AG04449 (cell line): ENCODE measurements at regions of chr5 and their contacts with region 1.

Region 1: DNA sequence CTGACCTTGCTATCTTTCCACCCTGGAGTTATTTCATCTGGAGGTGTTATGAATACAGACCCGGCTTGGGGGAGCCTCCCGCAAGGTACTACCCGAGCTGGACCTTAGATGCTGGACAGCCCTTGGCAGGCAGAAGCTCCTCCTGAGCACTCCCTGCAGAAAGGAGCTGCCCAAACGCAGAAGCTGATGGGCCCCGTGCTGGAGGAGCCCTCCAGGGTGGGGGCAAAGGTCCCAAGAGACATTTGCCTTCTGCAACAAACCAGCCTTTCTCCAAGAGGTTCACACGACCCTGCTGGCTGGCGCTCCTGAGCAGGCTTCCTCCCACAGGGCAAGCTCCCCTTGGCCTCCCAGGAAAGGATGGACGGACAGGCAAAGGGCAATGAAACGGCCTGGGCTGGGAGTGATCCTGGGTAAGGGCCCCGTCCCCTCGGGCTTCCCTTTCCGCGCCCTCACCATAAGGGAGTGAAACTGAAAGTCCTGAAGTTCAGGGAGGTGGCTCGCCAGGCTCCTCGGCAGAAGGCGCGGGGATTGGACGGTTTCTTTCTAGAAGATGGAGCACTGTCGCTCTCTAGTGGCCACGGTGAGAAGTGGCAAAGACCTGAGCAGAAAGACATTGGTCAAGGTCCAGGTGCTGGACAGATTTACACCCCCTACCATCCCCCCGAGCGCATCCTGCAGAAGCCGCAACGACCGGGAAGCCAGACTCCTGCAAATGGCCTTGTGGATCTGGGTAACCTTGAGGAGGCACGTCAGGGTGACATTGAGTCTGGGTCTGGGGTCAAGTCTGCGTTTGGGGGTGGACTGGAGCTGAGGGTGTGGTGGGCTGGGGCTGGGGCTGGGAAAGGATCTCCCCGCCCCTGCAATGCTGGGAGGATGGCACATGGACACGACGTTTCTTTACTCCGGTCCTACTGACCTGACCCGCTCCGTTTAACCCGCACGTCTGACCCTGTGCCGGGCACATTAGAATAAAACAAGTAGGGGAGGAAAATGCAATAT is 56.4 kb downstream of the NEURL1B start:
- DNase-seq: no peak
- H3K4me3 ChIP-seq: peak overlapping the region; percentile 68
- CTCF ChIP-seq: peak; percentile 82

Region 2: DNA sequence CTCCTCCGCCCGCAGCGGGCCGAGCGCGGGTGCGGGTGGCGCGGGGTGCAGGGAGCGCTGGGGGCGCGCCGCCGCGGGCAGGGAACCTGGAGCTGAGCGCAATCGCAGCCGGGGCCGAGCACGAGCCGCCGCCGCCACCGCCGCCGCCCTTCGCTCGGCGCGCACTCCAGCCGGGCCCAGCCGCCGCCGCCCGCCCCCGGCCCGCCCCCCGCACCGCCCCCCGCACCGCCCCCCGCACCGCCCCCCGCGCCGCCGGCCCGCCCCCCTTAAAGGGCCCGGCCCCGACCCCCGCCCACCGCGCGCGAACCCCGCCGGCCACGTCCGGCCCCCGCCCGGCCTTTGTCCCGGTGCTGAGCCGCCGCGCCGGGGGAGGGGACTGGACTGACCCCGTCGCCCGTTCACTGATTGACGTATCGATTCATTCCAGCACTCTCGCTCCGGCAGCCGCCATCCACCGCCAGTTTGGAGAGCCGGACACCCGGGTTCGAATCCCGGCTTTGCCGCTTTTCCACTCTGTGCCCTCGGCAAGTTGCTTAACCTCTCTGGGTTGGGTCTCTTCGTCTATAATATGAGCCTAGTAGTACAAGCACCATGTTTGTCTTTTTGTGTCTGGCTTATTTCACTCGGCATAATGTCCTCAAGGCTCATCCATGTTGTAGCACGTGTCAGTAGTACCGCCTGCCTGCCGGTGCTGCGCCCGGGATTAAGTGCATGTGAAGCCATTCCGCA is 242.9 kb before region 1 on chr5 and contains the start of gene SH3PXD2B:
- CTCF ChIA-PET with region 1: interaction called, 99 read pairs
- POLR2A ChIA-PET with region 1: no interaction called
- DNase-seq: no peak
- H3K4me3 ChIP-seq: peak within 1 kb of the TSS; percentile 85
- CTCF ChIP-seq: no peak

Region 3: GRCh38 chr5:172473427-172473826 is 224.0 kb before region 1 on chr5:
- CTCF ChIA-PET with region 1: interaction called, 412 read pairs
- POLR2A ChIA-PET with region 1: no interaction called
- DNase-seq: no peak
- H3K4me3 ChIP-seq: no peak overlapping the region
- CTCF ChIP-seq: no peak

Region 4: DNA sequence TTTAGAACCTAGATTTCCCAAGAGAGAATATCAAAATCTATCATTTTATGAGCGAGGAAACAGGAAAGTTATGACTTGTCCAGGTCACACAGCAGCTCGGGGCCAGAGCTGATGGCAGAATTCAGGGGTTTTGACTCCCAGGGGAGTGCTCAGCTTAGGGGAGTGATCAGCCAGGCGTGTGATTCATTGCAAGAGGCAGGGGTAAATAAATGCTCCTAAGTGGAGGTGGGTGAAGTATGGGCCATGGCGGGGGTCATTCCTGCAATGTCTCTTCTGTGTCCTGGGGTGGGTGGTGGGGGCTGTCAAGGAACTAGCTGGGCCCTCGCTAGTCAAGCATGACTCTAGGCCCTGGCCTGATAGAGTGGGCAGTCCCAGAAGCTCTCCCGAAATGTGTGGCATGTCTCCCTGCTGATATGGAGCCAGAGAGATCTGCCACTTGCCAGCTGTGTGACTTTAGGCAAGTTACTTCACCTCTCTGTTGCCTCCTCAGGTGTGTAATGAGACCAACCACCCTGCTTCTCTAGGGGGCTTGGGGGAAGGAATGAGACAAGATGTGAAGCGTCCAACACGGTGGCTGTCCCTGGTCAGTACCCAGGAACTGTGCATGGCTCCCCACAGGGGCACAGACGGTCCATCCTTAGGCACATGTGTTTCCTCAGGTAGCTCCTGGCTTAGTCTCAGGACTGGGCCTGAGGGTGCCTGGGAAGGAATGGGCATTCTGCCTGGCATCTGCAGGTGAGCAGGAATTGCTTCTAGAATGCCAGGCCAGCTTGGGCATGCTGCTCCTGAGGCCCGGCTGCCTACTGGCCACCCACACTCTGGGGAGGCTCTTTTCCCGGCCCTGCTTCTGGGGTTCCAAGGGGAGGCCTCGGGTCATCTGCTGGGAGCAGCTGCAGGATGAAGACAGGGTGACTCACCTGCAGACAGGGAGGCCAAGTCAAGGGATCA is 206.6 kb before region 1 on chr5:
- CTCF ChIA-PET with region 1: interaction called, 28 read pairs
- POLR2A ChIA-PET with region 1: no interaction called
- DNase-seq: no peak
- H3K4me3 ChIP-seq: no peak overlapping the region
- CTCF ChIP-seq: no peak

Region 5: GRCh38 chr5:172666251-172666650 is 31.2 kb before region 1 on chr5:
- CTCF ChIA-PET with region 1: interaction called, 10 read pairs
- POLR2A ChIA-PET with region 1: no interaction called
- DNase-seq: no peak
- H3K4me3 ChIP-seq: no peak overlapping the region
- CTCF ChIP-seq: no peak

Region 6: GRCh38 chr5:172680921-172681320 is 16.5 kb before region 1 on chr5:
- CTCF ChIA-PET with region 1: interaction called, 59 read pairs
- POLR2A ChIA-PET with region 1: no interaction called
- DNase-seq: no peak
- H3K4me3 ChIP-seq: no peak overlapping the region
- CTCF ChIP-seq: no peak

Region 7: DNA sequence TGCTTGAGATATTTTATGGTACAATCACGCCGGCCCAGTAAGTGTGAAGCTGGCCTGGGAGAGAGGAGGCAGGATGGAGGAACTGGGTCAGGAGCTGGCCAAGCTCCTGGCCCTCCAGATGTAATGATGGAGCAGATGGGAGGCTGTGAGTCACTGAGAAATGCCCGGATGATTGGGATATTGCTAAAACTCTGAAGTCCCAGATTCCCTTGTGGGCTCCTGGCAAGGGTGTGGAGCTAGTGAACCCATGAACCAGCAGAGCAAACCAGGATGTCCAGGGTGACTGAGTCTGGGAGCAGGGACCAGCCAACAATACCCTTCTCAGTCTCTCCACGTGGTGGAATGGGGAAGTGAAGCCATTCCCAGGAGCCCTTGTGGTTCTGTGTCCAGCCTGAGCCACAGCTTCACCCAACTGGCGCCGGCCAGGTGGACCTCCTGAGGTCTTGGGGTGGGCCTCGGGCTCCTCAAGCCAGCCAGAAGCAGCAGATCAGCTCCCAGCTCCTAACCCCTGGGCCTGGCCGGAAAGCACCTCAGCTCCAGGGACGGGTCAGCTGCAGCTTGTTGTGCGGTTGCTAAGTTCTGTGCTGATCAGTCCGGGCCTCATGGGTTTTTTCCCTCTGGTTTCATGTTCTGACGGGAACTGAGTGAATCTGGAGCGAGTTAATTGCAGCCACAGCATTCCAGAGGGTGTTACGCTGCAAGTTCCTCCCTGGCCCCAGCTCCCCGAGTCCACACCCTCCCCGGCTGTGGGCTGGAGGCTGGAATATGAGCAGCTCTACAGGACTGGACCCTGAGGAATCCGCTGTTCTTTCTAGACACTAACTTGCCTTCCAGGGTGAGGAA is 35.9 kb after region 1 on chr5:
- CTCF ChIA-PET with region 1: no interaction called
- POLR2A ChIA-PET with region 1: no interaction called
- DNase-seq: peak; percentile 98
- H3K4me3 ChIP-seq: peak overlapping the region; percentile 36
- CTCF ChIP-seq: no peak

Region 8: GRCh38 chr5:172777881-172778814 is 80.7 kb after region 1 on chr5:
- CTCF ChIA-PET with region 1: no interaction called
- POLR2A ChIA-PET with region 1: no interaction called
- DNase-seq: no peak
- H3K4me3 ChIP-seq: no peak overlapping the region
- CTCF ChIP-seq: no peak